ENCODE measurements at regions of chr7 and their contacts with region 1.

Region 1: GRCh38 chr7:44606450-44607254 is at the start of gene OGDH:
- DNase-seq: peak; percentile 99
- ATAC-seq: peak; percentile 99
- H3K4me3 ChIP-seq: peak within 1 kb of the TSS; percentile 77
- H3K27ac ChIP-seq: peak within 1 kb of the TSS; percentile 84
- H3K4me1 ChIP-seq: peaks cover 8 to 27% of the 10 kb centered on the region in 2 experiments; a peak in 4 of 5 replicates
- H3K27me3 ChIP-seq: no peaks in the 10 kb centered on the region
- CTCF ChIP-seq: no peak
- EP300 ChIP-seq: no peak
- POLR2A ChIP-seq: peak; percentile 98
- RAD21 ChIP-seq: no peak
- polyA plus RNA-seq, gene OGDH: 3.1 to 6.3 TPM

Region 2: GRCh38 chr7:44264221-44264931 is 342.3 kb before region 1 on chr7:
- CTCF ChIA-PET with region 1: no interaction called
- POLR2A ChIA-PET with region 1: no interaction called
- in situ Hi-C with region 1: no loop called
- intact Hi-C with region 1: no loop called
- DNase-seq: no peak
- ATAC-seq: no peak
- H3K4me3 ChIP-seq: no peak overlapping the region
- H3K27ac ChIP-seq: no peak overlapping the region
- H3K4me1 ChIP-seq: peaks cover 3 to 6% of the 10 kb centered on the region in 2 experiments; a peak in 3 of 5 replicates
- H3K27me3 ChIP-seq: peaks cover 39 to 73% of the 10 kb centered on the region in 2 experiments
- CTCF ChIP-seq: no peak
- EP300 ChIP-seq: no peak
- POLR2A ChIP-seq: no peak
- RAD21 ChIP-seq: no peak

Region 3: DNA sequence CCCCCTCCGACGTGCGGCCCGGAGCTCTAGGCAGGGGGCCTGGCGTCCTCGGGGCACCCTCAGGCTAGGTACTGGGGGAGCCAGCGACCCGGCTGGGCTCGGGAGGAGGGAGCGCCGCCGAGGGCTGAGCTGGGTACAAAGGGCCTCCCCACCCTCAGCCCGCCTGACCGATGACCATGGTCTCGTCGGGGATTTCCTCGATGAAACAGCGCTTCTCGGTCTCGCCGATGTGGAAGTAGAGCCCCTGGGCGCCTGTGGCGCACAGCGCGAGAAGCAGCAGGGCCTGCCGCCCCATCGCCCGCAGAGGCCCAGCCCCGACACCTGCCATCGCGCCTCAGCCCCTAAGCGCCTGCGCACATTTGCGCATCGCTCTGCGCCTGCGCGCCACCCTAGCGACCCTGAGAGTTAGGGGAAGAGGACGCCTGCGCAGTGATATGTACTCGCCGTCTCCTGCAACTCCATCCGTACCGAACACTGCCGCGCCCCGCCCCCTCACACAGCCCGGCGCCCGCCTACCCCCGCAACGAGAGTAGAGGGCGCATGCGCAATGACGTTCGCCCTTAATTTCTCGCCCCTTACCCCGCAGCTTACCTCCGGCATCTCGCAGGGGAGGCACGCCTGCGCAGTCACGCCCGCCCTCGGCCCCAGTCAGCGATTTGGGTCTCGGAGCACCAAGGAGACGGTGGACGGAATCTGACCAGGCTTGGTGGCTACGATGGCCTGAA is 24.6 kb before region 1 on chr7 and contains the start of gene TMED4:
- CTCF ChIA-PET with region 1: no interaction called
- POLR2A ChIA-PET with region 1: interaction called, 13 read pairs
- in situ Hi-C with region 1: no loop called
- intact Hi-C with region 1: no loop called
- DNase-seq: peak; percentile 99 to 100 (median 99)
- ATAC-seq: peak; percentile 95
- H3K4me3 ChIP-seq: peak within 1 kb of the TSS; percentile 81
- H3K27ac ChIP-seq: peak within 1 kb of the TSS; percentile 92
- H3K4me1 ChIP-seq: peaks cover 9 to 25% of the 10 kb centered on the region in 2 experiments; a peak in 4 of 5 replicates
- H3K27me3 ChIP-seq: no peaks in the 10 kb centered on the region
- CTCF ChIP-seq: no peak
- EP300 ChIP-seq: no peak
- POLR2A ChIP-seq: peak; percentile 90
- RAD21 ChIP-seq: no peak
- polyA plus RNA-seq, gene TMED4: 20.3 to 23.1 TPM

Region 4: DNA sequence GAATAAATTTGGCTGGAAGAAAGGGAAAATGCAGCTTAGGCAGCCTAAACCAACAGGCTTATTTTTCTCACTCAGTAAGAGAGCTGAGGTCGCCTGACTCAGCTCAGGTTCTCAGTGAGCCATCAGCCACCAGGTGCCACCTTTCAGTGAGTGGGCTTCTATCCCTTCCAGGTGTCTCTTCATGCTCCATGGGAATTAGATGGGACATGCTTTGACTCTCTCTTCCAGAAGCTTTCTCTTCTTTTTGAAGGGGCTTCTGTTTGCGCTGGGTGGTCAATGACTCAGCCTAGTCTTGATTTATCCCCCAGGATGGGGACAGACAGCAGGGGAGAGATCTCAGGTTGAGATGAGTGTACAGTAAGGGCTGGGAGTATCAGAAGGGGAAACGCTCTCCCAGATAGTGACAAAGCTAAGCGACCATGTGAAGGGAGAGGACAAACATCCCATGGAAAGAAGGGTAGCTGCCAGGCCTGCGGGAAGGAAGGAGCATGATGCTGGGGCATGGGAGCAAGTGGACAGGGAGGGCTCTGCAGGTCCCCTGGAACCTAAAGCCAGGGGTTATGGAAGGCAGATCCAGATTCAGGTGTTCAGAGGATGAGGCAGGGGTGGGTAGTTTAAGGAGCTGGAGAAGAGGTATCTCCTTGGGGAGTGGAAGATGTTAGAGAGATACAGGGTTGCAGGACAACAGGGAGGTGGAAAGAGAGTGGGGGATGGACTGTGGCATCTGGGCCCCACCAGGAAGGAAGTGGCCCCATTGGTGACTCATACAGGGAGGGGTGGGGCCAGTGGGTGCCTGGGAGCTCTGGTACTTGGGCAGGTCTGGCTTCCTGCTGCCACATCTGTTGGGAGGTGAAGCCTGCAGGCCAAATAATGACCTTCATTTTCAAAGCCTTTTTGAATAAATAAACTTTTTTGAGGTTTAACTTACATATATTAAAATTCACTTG is 32.2 kb after region 1 on chr7:
- CTCF ChIA-PET with region 1: no interaction called
- POLR2A ChIA-PET with region 1: interaction called, 4 read pairs
- in situ Hi-C with region 1: no loop called
- intact Hi-C with region 1: loop called (anchors 2 kb)
- DNase-seq: peak; percentile 85 to 92 (median 88)
- ATAC-seq: peak; percentile 89
- H3K4me3 ChIP-seq: no peak overlapping the region
- H3K27ac ChIP-seq: peak overlapping the region; percentile 84
- H3K4me1 ChIP-seq: peaks cover 40 to 48% of the 10 kb centered on the region in 2 experiments
- H3K27me3 ChIP-seq: no peaks in the 10 kb centered on the region
- CTCF ChIP-seq: peak in 1 of 3 experiments; percentile 19; a peak in 1 of 6 replicates
- EP300 ChIP-seq: peak; percentile 72; the same call in 1 of the 2 replicates
- POLR2A ChIP-seq: no peak; the same call in 1 of the 2 replicates
- RAD21 ChIP-seq: 0 out of 4 replicates have a peak, but pooled peaks of 1 of the 2 experiments have one; percentile 21

Region 5: DNA sequence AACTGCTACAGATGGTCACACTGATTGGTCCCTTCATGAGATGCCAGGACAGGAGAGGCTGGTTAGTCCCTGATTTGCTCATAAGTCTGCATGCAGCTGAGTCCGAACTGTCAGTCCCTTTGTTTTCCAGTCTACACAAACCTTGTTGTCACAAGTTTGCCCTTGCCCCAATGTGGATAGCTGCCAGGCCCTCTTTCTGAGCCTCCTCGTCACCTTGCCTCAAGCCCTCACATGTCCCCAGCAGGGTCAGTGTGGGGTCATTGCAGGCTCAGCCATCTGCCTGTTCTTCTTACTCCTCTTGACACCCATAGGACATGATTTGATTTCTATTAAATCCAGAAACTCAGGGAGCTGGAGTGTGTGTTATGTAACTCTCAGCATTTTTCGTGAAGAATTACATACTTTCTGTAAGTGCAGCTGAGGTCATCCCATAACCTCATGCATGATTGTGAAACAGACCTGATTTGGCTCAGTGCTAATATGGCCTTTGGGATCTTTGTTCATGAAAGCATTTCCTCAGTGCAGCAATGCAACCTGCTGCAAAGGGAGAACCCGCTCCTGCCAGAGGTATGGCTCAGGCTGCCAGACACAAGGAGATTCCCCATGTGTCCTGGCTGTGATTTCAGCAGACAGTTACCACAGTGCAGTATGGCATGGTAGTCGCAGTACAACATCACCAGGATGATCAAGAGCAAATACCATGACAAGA is 72.0 kb after region 1 on chr7:
- CTCF ChIA-PET with region 1: no interaction called
- POLR2A ChIA-PET with region 1: no interaction called
- in situ Hi-C with region 1: no loop called
- intact Hi-C with region 1: loop called (anchors 5 kb)
- DNase-seq: no peak
- ATAC-seq: peak; percentile 34
- H3K4me3 ChIP-seq: no peak overlapping the region
- H3K27ac ChIP-seq: peak overlapping the region; percentile 19; the same call in 1 of the 3 replicates
- H3K4me1 ChIP-seq: peaks cover 13 to 14% of the 10 kb centered on the region in 2 experiments; a peak in 3 of 5 replicates
- H3K27me3 ChIP-seq: no peaks in the 10 kb centered on the region
- CTCF ChIP-seq: no peak
- EP300 ChIP-seq: no peak
- POLR2A ChIP-seq: no peak
- RAD21 ChIP-seq: no peak

Region 6: GRCh38 chr7:44761207-44762161 is 154.8 kb after region 1 on chr7:
- CTCF ChIA-PET with region 1: no interaction called
- POLR2A ChIA-PET with region 1: no interaction called
- in situ Hi-C with region 1: no loop called
- intact Hi-C with region 1: loop called (anchors 5 kb)
- DNase-seq: peak; percentile 94 to 99 (median 99)
- ATAC-seq: peak; percentile 98
- H3K4me3 ChIP-seq: peak overlapping the region; percentile 46
- H3K27ac ChIP-seq: peak overlapping the region; percentile 62
- H3K4me1 ChIP-seq: peaks cover 16 to 54% of the 10 kb centered on the region in 2 experiments; a peak in 4 of 5 replicates
- H3K27me3 ChIP-seq: no peaks in the 10 kb centered on the region
- CTCF ChIP-seq: peak in 1 of 3 experiments; percentile 8; a peak in 1 of 6 replicates
- EP300 ChIP-seq: no peak
- POLR2A ChIP-seq: peak; percentile 67
- RAD21 ChIP-seq: no peak

Region 7: GRCh38 chr7:44797329-44798251 is 190.9 kb after region 1 on chr7:
- CTCF ChIA-PET with region 1: no interaction called
- POLR2A ChIA-PET with region 1: interaction called, 15 read pairs
- in situ Hi-C with region 1: no loop called
- intact Hi-C with region 1: loop called (anchors 2 kb)
- DNase-seq: peak; percentile 65 to 94 (median 73)
- ATAC-seq: peak; percentile 82
- H3K4me3 ChIP-seq: peak overlapping the region; percentile 56
- H3K27ac ChIP-seq: peak overlapping the region; percentile 98
- H3K4me1 ChIP-seq: peaks cover 12 to 25% of the 10 kb centered on the region in 2 experiments; a peak in 4 of 5 replicates
- H3K27me3 ChIP-seq: no peaks in the 10 kb centered on the region
- CTCF ChIP-seq: peak; percentile 62 to 76 (median 67)
- EP300 ChIP-seq: no peak
- POLR2A ChIP-seq: no peak; the same call in 1 of the 2 replicates
- RAD21 ChIP-seq: peak; percentile 34 to 45; a peak in 3 of 4 replicates